ENCODE measurements at regions of chr9 and their contacts with region 1.

Region 1: DNA sequence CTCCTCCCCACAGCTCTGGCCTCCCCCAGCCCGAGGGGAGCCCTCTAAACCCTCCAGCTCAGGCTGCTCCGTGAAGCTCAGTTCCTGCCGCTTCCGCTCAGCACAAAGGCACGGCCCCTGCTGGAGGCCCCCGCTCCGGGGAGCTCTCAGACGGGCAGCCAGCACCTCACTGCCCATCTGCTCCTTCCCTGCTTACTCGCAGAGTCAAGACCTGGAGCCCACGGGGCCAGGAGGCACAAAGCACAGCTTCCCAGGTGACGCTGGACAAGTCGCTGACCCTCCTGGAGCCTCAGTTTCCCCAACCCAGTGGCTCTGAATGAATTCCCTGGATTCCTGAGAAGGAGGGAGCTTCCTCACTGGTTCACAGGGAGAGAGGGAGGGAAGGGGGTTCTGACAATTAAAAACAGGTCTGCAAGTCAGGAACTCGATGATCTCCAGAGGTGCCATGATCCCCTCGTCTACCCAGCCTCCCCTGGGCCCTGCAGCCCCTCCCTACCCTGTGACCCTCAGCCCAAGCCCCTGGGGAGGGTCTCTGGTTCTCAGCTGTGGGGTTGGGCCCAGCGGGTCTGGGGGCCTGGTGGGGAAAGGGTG is 36.2 kb downstream of the VAV2 start:
- DNase-seq: peak; percentile 90
- H3K4me3 ChIP-seq: peak overlapping the region; percentile 64
- H3K27ac ChIP-seq: peak overlapping the region; percentile 93
- H3K4me1 ChIP-seq: peaks cover 69% of the 10 kb centered on the region
- CTCF ChIP-seq: 0 out of 2 replicates have a peak, but pooled peaks have one; percentile 16

Region 2: DNA sequence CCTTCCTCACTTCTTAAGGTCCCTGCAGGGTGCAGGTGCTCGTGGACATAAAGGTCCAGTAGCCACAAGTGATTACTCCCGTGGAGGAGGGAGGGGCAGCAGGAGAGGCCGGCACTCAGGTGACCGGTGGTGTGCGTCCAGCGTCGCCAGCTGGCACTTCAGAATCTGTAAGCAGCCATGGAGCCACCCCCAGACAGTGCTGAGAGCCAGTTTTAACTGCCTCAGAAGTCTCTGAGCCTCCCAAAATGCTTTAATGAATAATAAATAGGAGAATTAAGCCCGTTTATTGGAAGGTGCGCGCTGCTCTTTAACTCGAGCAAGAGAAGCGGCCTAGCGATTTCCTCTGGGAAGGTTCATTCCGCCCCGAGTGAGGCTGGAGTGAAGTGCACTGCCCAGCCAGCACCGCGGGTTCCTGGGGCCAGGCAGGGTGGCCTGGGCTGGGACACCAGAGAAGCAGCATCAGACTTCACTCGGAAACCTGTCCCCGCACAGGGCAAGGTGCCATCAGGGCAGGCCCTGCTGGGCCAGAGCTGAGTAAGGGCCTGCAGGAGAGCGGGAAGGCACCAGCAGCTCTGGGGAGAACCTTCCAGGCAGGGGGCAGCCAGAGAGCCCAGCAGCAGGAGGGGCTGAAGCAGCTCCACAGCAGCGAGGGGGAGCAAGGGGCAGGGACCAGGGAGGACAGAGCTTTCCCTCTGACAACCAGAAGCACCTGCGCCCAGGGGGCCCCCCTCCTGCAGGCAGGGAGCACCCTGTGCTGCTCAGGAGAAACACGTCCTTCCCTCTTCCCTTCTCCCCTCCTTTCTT is 25.0 kb before region 1 on chr9:
- CTCF ChIA-PET with region 1: no interaction called
- POLR2A ChIA-PET with region 1: no interaction called
- intact Hi-C with region 1: no loop called
- DNase-seq: no peak
- H3K4me3 ChIP-seq: no peak overlapping the region
- H3K27ac ChIP-seq: no peak overlapping the region
- H3K4me1 ChIP-seq: no peaks in the 10 kb centered on the region
- CTCF ChIP-seq: no peak

Region 3: GRCh38 chr9:133945314-133945975 is 10.5 kb before region 1 on chr9:
- CTCF ChIA-PET with region 1: interaction called, 6 read pairs
- POLR2A ChIA-PET with region 1: interaction called, 46 read pairs
- intact Hi-C with region 1: loop called (anchors 1 kb)
- DNase-seq: peak; percentile 82
- H3K4me3 ChIP-seq: peak overlapping the region; percentile 38
- H3K27ac ChIP-seq: peak overlapping the region; percentile 89
- H3K4me1 ChIP-seq: peaks cover 51% of the 10 kb centered on the region
- CTCF ChIP-seq: no peak

Region 4: DNA sequence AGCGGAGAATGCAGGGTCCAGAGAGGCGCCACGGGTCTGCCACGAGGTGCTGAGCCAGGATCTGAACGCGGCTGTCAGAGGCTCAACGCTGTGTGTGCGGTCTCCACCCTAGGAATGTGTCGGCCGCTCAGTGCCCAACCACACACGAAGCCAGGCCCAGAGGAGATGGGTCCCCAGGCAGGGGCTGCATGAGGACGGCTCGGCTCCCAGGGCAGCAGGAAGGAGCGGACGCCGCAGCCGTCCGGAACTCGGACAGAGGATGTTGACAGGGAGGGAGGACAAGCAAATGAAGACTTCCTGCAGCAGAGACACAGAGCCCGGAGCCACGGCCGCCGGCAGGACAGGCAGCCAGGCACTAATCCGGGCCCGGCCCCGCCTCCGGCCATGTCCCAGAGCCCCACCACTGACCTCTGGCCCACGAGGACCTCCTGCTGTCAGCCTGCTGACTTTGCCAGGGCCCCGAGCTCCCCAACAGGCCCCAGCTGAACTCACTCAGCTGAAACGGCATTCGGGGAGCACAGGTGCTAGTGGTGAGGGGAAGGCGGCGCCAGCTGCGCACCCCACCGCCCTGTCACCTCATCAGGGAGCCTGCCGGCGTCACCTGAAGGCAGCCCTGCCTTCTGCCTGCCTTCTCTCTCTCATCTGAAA is 23.5 kb after region 1 on chr9:
- CTCF ChIA-PET with region 1: no interaction called
- POLR2A ChIA-PET with region 1: interaction called, 15 read pairs
- intact Hi-C with region 1: loop called (anchors 1 kb)
- DNase-seq: peak; percentile 86
- H3K4me3 ChIP-seq: peak overlapping the region; percentile 48
- H3K27ac ChIP-seq: peak overlapping the region; percentile 70
- H3K4me1 ChIP-seq: peaks cover 45% of the 10 kb centered on the region
- CTCF ChIP-seq: no peak